CD4-positive, alpha-beta T cell (primary cell): ENCODE measurements at regions of chr11 and their contacts with region 1.

Region 1: GRCh38 chr11:96242971-96243647 is 99.9 kb downstream of the MAML2 start:
- DNase-seq: peak; percentile 51 to 90 (median 68)
- ATAC-seq: peak; percentile 83
- H3K4me3 ChIP-seq: peak overlapping the region; percentile 57
- H3K4me3 Mint-ChIP-seq: peak overlapping the region; percentile 92
- H3K27ac ChIP-seq: peak overlapping the region; percentile 58 to 76
- H3K27ac Mint-ChIP-seq: peak overlapping the region; percentile 99
- H3K4me1 ChIP-seq: peaks cover 35% of the 10 kb centered on the region
- H3K4me1 Mint-ChIP-seq: peaks cover 69% of the 10 kb centered on the region
- H3K27me3 ChIP-seq: no peaks in the 10 kb centered on the region
- H3K27me3 Mint-ChIP-seq: no peaks in the 10 kb centered on the region
- CTCF ChIP-seq: no peak

Region 2: DNA sequence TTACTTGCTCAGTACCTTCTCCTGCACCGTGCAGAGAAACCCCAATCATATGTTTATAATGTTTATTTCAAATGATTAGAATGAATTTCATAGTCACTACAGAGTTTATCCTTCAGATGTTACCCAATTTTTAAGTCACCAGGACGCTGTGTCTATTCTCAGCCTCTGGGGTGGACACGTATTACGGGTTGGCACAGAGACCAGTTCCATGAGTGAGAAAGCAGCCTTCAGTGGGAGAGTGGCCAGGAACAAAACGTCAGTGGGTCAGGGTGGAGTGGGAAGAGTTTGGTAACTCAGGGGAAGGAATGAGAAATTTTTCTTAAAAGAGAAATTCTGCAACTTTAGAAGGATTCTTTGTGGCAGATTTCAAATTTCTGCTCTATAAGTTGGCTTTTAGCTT is 242.1 kb before region 1 on chr11:
- CTCF ChIA-PET with region 1: no interaction called
- POLR2A ChIA-PET with region 1: no interaction called
- intact Hi-C with region 1: no loop called
- DNase-seq: no peak
- ATAC-seq: no peak
- H3K4me3 ChIP-seq: no peak overlapping the region
- H3K4me3 Mint-ChIP-seq: no peak overlapping the region
- H3K27ac ChIP-seq: no peak overlapping the region
- H3K27ac Mint-ChIP-seq: no peak overlapping the region
- H3K4me1 ChIP-seq: no peaks in the 10 kb centered on the region
- H3K4me1 Mint-ChIP-seq: peaks cover 41% of the 10 kb centered on the region
- H3K27me3 ChIP-seq: no peaks in the 10 kb centered on the region
- H3K27me3 Mint-ChIP-seq: no peaks in the 10 kb centered on the region
- CTCF ChIP-seq: no peak

Region 3: DNA sequence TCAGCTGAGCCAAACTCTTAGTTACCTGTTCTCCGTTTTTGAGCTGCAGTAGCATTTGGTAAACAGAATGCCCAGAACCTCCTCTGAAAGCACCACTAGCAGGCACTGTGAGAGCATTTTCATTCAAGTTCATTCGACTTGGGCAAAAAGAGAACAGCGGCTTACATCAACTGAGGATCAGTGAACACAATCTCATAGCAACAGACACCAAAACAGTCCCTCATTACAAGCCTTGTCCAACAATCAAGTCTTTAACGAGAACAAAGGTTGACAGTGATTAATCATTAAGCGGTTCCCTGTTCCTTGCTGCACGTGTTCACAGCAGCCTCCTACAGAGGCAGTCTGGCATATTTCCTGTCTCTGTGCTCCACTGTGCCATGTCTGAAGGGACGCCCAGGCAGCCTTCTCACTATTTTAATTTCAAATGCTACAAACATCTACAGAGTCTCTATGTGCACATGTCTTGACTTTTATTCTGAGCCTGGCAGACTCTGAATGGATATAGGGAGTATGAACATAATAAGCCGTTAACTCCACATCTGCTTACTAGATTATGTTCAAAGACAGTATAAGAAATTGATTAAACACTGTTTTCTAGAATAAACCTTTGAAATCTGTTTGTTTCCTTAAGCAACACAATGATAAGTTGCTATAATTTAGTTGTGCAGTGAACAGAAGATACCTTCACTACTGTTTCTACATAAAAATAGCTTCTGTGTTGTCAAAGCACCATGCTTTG is 230.9 kb before region 1 on chr11:
- CTCF ChIA-PET with region 1: interaction called, 4 read pairs
- POLR2A ChIA-PET with region 1: interaction called, 3 read pairs
- intact Hi-C with region 1: loop called in 1 of 2 experiments (anchors 2 kb)
- DNase-seq: peak; percentile 34 to 89 (median 57)
- ATAC-seq: peak; percentile 75
- H3K4me3 ChIP-seq: peak overlapping the region; percentile 24
- H3K4me3 Mint-ChIP-seq: peak overlapping the region; percentile 54
- H3K27ac ChIP-seq: peak overlapping the region; percentile 10 to 82
- H3K27ac Mint-ChIP-seq: no peak overlapping the region
- H3K4me1 ChIP-seq: peaks cover 33% of the 10 kb centered on the region
- H3K4me1 Mint-ChIP-seq: peaks cover 21% of the 10 kb centered on the region
- H3K27me3 ChIP-seq: no peaks in the 10 kb centered on the region
- H3K27me3 Mint-ChIP-seq: no peaks in the 10 kb centered on the region
- CTCF ChIP-seq: peak; percentile 39

Region 4: DNA sequence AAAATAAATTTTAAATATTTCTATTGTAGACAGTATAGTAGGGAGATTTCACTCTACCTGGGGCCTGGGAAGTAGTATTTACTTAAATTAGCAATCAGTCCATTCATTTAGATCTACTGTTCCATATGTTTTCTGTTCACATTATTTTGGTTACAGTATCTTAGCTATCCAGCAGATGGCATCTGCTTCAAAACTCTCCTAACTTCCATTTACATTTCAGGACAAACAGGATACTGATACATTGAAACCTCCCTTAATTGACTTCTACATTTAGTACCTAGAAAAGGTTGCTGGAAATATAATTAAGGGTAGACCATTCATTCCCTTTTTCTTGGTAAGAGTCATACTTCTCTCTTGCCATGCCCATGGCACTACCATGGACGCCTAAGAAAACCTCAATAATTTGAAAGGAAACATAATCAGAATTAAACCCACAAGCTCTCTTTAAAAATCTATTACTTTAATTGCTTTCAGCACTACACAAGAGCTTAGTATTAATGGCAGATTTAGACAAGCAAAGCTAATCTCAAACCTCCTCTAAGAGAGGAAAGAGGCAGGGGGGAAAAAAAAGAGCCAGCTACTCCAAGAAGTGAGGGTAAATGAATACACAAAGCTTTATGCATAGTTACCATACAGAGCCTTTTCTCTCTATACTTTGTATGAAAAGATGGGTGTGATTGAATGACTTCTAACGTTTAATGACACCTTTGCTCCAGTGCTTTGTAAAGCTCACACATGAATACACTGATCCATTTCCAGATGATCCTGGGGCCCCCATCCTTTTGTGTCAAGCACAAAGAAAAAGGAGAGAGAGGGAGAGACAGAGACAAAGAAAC is 188.0 kb before region 1 on chr11:
- CTCF ChIA-PET with region 1: interaction called, 5 read pairs
- POLR2A ChIA-PET with region 1: interaction called, 4 read pairs
- intact Hi-C with region 1: loop called in 1 of 2 experiments (anchors 5 kb)
- DNase-seq: peak in 3 of 14 experiments; percentile 55 to 57 (median 57)
- ATAC-seq: peak; percentile 76
- H3K4me3 ChIP-seq: no peak overlapping the region
- H3K4me3 Mint-ChIP-seq: no peak overlapping the region
- H3K27ac ChIP-seq: no peak overlapping the region
- H3K27ac Mint-ChIP-seq: peak overlapping the region; percentile 26
- H3K4me1 ChIP-seq: peaks cover 2% of the 10 kb centered on the region
- H3K4me1 Mint-ChIP-seq: peaks cover 83% of the 10 kb centered on the region
- H3K27me3 ChIP-seq: no peaks in the 10 kb centered on the region
- H3K27me3 Mint-ChIP-seq: no peaks in the 10 kb centered on the region
- CTCF ChIP-seq: peak; percentile 65

Region 5: DNA sequence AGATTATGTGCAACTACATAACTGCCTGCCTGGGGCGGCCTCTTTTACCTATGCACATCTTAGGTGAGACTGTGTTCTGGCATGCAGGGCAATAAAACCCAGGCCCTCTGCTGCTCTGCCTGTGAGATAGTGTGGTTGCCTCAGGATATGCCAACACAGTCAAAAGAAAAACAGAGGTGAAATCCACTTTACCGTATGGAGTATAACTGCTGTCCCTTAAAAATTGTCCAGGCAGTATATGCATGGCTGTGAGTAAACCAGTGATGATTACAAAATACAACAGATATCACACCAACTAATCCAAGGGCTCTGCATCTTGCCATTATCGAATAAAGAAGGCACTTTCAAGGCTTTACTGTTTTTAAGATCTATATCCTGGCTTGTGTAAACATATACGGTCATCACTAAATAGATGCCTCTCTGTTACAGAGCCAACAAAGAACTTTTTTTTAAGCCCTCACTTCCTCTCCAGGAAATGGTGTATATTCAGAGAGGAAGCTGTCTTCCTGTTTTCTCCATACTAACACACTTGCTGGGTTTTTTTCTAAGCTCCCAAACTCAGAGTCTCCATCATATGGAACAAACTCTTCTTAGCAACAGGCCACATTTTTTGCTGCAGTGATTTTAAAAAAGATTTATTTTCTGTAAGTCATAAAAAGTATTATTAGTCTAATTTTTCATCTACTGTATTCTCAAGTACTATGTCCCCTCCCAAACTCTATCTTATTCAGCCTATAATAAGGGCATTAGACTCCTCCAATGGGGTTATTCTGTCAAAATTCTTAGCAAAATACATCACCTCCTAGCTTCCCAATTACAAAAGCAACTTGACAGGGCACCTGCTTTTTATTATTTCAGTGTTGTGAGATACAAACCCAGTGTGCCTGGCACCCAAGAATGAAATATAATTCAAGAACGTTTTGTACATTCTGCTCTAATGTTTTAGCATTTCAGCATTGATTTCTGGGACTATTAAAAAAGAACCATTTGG is 35.4 kb before region 1 on chr11:
- CTCF ChIA-PET with region 1: interaction called, 3 read pairs
- POLR2A ChIA-PET with region 1: interaction called, 29 read pairs
- intact Hi-C with region 1: loop called in 1 of 2 experiments (anchors 5 kb)
- DNase-seq: peak in 10 of 14 experiments; percentile 12 to 84 (median 32)
- ATAC-seq: peak; percentile 68
- H3K4me3 ChIP-seq: peak overlapping the region; percentile 22
- H3K4me3 Mint-ChIP-seq: peak overlapping the region; percentile 72
- H3K27ac ChIP-seq: peak overlapping the region; percentile 62 to 78
- H3K27ac Mint-ChIP-seq: peak overlapping the region; percentile 94
- H3K4me1 ChIP-seq: peaks cover 57% of the 10 kb centered on the region
- H3K4me1 Mint-ChIP-seq: peaks cover 86% of the 10 kb centered on the region
- H3K27me3 ChIP-seq: no peaks in the 10 kb centered on the region
- H3K27me3 Mint-ChIP-seq: no peaks in the 10 kb centered on the region
- CTCF ChIP-seq: no peak

Region 6: GRCh38 chr11:96215110-96215782 is 27.9 kb before region 1 on chr11:
- CTCF ChIA-PET with region 1: interaction called, 3 read pairs
- POLR2A ChIA-PET with region 1: interaction called, 29 read pairs
- intact Hi-C with region 1: no loop called
- DNase-seq: peak in 12 of 14 experiments; percentile 11 to 71 (median 31)
- ATAC-seq: peak; percentile 68
- H3K4me3 ChIP-seq: peak overlapping the region; percentile 11
- H3K4me3 Mint-ChIP-seq: peak overlapping the region; percentile 65
- H3K27ac ChIP-seq: peak overlapping the region; percentile 75
- H3K27ac Mint-ChIP-seq: peak overlapping the region; percentile 92
- H3K4me1 ChIP-seq: peaks cover 70% of the 10 kb centered on the region
- H3K4me1 Mint-ChIP-seq: peaks cover 87% of the 10 kb centered on the region
- H3K27me3 ChIP-seq: no peaks in the 10 kb centered on the region
- H3K27me3 Mint-ChIP-seq: no peaks in the 10 kb centered on the region
- CTCF ChIP-seq: no peak

Region 7: GRCh38 chr11:96228473-96228891 is 14.6 kb before region 1 on chr11:
- CTCF ChIA-PET with region 1: interaction called, 3 read pairs
- POLR2A ChIA-PET with region 1: interaction called, 33 read pairs
- intact Hi-C with region 1: no loop called
- DNase-seq: no peak
- ATAC-seq: no peak
- H3K4me3 ChIP-seq: no peak overlapping the region
- H3K4me3 Mint-ChIP-seq: peak overlapping the region; percentile 14
- H3K27ac ChIP-seq: no peak overlapping the region
- H3K27ac Mint-ChIP-seq: peak overlapping the region; percentile 86
- H3K4me1 ChIP-seq: peaks cover 18% of the 10 kb centered on the region
- H3K4me1 Mint-ChIP-seq: peaks cover 89% of the 10 kb centered on the region
- H3K27me3 ChIP-seq: no peaks in the 10 kb centered on the region
- H3K27me3 Mint-ChIP-seq: no peaks in the 10 kb centered on the region
- CTCF ChIP-seq: no peak

Region 8: GRCh38 chr11:96279018-96279895 is 36.1 kb after region 1 on chr11:
- CTCF ChIA-PET with region 1: no interaction called
- POLR2A ChIA-PET with region 1: interaction called, 3 read pairs
- intact Hi-C with region 1: loop called in 1 of 2 experiments (anchors 5 kb)
- DNase-seq: peak in 1 of 14 experiments; percentile 42
- ATAC-seq: peak; percentile 70
- H3K4me3 ChIP-seq: no peak overlapping the region
- H3K4me3 Mint-ChIP-seq: peak overlapping the region; percentile 18
- H3K27ac ChIP-seq: no peak overlapping the region
- H3K27ac Mint-ChIP-seq: peak overlapping the region; percentile 48
- H3K4me1 ChIP-seq: peaks cover 10% of the 10 kb centered on the region
- H3K4me1 Mint-ChIP-seq: peaks cover 75% of the 10 kb centered on the region
- H3K27me3 ChIP-seq: no peaks in the 10 kb centered on the region
- H3K27me3 Mint-ChIP-seq: no peaks in the 10 kb centered on the region
- CTCF ChIP-seq: no peak

Region 9: GRCh38 chr11:96361778-96362177 is 118.7 kb after region 1 on chr11:
- CTCF ChIA-PET with region 1: no interaction called
- POLR2A ChIA-PET with region 1: no interaction called
- intact Hi-C with region 1: no loop called
- DNase-seq: no peak
- ATAC-seq: no peak
- H3K4me3 ChIP-seq: no peak overlapping the region
- H3K4me3 Mint-ChIP-seq: no peak overlapping the region
- H3K27ac ChIP-seq: no peak overlapping the region
- H3K27ac Mint-ChIP-seq: no peak overlapping the region
- H3K4me1 ChIP-seq: no peaks in the 10 kb centered on the region
- H3K4me1 Mint-ChIP-seq: no peaks in the 10 kb centered on the region
- H3K27me3 ChIP-seq: no peaks in the 10 kb centered on the region
- H3K27me3 Mint-ChIP-seq: no peaks in the 10 kb centered on the region
- CTCF ChIP-seq: no peak

Region 10: DNA sequence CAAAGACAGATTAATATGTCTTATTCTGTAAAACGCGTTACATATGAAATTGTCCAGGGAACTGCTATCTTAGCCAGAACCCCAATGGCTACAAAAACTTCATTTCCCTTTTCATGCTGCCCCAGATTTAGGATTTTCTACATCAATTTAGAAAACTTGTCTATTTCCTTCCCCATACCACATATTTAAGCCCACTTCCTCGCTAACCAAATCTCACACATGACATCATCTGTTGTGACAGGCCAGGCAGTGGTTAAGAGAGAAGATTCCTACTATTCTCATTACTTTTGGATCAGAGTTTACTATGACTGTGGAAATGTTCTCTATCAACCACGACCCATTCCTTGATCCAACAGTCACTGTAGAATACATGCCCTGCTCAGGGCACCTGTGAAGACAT is 130.7 kb after region 1 on chr11:
- CTCF ChIA-PET with region 1: no interaction called
- POLR2A ChIA-PET with region 1: no interaction called
- intact Hi-C with region 1: no loop called
- DNase-seq: no peak
- ATAC-seq: no peak
- H3K4me3 ChIP-seq: no peak overlapping the region
- H3K4me3 Mint-ChIP-seq: no peak overlapping the region
- H3K27ac ChIP-seq: no peak overlapping the region
- H3K27ac Mint-ChIP-seq: no peak overlapping the region
- H3K4me1 ChIP-seq: no peaks in the 10 kb centered on the region
- H3K4me1 Mint-ChIP-seq: no peaks in the 10 kb centered on the region
- H3K27me3 ChIP-seq: no peaks in the 10 kb centered on the region
- H3K27me3 Mint-ChIP-seq: no peaks in the 10 kb centered on the region
- CTCF ChIP-seq: no peak